Heart left ventricle (tissue), 16 donors: ENCODE measurements at regions of chr9 and their contacts with region 1.

Region 1: DNA sequence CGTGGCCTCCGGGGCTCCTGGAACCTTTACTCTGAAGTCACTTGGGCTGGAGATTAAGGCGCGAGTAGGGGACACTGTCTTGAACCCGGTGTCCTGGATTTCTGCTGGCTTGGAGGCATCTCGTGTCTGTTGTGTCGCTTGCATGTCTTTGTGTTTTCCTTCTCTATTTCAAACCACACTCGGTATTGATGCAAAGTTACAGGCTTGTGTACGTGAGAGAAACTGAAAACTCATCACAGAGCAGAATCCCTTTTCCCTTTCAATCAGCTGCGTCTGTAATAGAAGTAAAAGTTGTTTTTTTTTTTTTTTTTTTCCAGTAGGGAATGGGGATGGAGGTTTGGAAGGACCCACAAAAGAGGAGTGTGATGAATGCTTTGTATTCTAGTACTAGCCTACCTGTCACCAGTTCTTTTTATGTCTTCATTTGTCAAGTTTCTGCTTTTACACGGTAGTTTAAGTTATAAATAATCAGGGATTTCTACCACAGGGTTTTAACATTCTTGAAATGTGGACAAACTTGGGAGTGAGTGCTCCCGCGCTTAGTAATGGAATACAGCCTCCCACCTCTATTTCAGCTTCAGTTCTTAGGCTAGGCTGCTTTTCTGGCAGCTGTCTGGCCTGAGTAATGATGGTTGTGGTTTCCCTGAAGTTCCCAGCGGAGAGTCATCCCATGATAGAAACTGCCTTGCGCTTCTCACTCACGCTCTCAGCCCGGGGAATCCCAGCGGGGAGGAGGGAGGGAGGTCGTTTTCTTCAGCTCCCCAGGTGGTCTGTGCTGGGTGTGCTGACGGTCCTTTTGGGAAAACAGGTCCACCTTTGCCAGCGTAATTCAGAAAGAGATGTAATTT is 763 bp downstream of the TJP2 start:
- DNase-seq: peak in 4 of 5 donors; percentile 41 to 62 (median 54)
- ATAC-seq: peak; percentile 41 to 72 (median 50)
- H3K4me3 ChIP-seq: peak overlapping the region; percentile 65 to 90 (median 76)
- H3K27ac ChIP-seq: peak overlapping the region in 11 of 12 donors; percentile 75 to 96 (median 89)
- H3K4me1 ChIP-seq: peaks cover 7 to 85% (median 47%) of the 10 kb centered on the region in 12 donors
- H3K27me3 ChIP-seq: no peaks in the 10 kb centered on the region
- CTCF ChIP-seq: no peak
- POLR2A ChIP-seq: no peak

Region 2: DNA sequence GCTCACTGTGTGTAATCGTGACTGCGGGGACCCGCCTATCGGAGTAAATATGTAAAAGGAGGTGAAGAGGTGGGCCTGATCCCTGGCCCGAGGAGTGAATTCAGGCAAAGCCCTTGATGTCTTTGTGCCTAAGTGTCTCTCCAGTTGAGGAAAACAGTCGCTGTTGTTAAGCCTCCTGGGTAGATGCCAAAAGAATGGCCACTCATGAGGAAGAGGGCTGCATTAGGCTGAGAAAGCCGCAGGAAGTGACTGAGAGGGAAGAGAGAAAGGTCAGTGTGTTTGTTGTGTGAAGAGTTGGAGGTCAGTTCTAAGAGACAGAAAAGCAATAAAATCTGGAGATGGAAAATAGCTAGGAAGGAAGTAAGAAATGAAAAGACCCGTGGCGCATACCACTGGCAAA is 505.6 kb before region 1 on chr9:
- intact Hi-C with region 1: no loop called
- DNase-seq: no peak
- ATAC-seq: no peak
- H3K4me3 ChIP-seq: no peak overlapping the region
- H3K27ac ChIP-seq: no peak overlapping the region
- H3K4me1 ChIP-seq: peaks cover 0 to 8% (median 0%) of the 10 kb centered on the region in 12 donors
- H3K27me3 ChIP-seq: no peaks in the 10 kb centered on the region
- CTCF ChIP-seq: no peak
- POLR2A ChIP-seq: no peak

Region 3: GRCh38 chr9:69121828-69122548 is 52.9 kb before region 1 on chr9:
- intact Hi-C with region 1: loop called in 1 of 10 experiments (anchors 5 kb)
- DNase-seq: peak; percentile 70 to 84 (median 78)
- ATAC-seq: peak; percentile 82 to 89 (median 84)
- H3K4me3 ChIP-seq: peak overlapping the region; percentile 63 to 87 (median 81)
- H3K27ac ChIP-seq: peak overlapping the region; percentile 70 to 96 (median 90)
- H3K4me1 ChIP-seq: peaks cover 0 to 17% (median 9%) of the 10 kb centered on the region in 12 donors
- H3K27me3 ChIP-seq: no peaks in the 10 kb centered on the region
- CTCF ChIP-seq: peak in 3 of 12 donors; percentile 1 to 32 (median 21)
- POLR2A ChIP-seq: no peak

Region 4: DNA sequence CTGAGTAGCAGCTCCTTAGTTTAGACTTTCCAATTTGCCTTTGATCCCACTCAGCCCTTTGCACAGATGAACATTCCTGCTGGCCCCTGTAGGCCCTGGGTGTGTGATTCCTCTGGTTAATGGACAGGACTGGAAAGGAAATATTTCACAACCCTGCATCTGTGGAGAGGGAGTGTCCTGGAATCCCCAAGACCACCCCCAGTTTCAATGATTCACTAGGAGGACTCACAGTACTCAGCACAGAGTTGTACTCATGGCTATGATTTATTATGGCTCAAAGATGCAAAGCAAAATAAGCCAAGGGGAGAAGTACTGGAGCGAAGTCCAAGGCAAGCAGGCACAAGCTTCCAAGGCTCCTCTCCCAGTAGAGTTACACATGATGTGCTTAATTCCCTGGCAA is 43.2 kb before region 1 on chr9:
- intact Hi-C with region 1: loop called in 1 of 10 experiments (anchors 5 kb)
- DNase-seq: no peak
- ATAC-seq: peak; percentile 31 to 72 (median 48)
- H3K4me3 ChIP-seq: no peak overlapping the region
- H3K27ac ChIP-seq: peak overlapping the region in 10 of 12 donors; percentile 55 to 85 (median 72)
- H3K4me1 ChIP-seq: peaks cover 3 to 71% (median 29%) of the 10 kb centered on the region in 12 donors
- H3K27me3 ChIP-seq: no peaks in the 10 kb centered on the region
- CTCF ChIP-seq: no peak
- POLR2A ChIP-seq: no peak

Region 5: GRCh38 chr9:69143291-69143690 is 31.5 kb before region 1 on chr9:
- intact Hi-C with region 1: loop called in 2 of 10 experiments (anchors 5 kb)
- DNase-seq: peak in 2 of 5 donors; percentile 4 to 17
- ATAC-seq: peak in 1 of 4 donors; percentile 31
- H3K4me3 ChIP-seq: no peak overlapping the region
- H3K27ac ChIP-seq: peak overlapping the region in 4 of 12 donors; percentile 43 to 71 (median 56)
- H3K4me1 ChIP-seq: peaks cover 0 to 44% (median 19%) of the 10 kb centered on the region in 12 donors
- H3K27me3 ChIP-seq: no peaks in the 10 kb centered on the region
- CTCF ChIP-seq: no peak
- POLR2A ChIP-seq: no peak

Region 6: DNA sequence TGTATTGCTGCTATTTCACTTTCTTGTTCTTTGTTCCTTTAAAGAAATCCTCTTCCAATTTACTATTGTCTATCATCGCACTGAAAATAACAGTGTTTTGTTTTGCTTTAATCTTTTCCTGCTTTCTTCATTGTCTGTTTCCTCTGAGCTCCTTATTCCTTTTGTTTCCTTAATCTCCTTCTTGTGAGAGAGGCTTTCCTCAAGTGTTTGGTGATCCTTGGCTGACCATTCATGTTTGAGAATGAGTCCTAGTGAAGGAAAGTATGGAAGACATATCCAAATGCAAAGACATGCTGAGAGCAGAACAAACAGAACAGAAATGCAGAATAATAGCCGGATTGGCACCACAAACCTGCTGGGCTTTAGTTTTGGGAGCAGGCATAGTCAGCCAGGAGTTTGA is 108.2 kb after region 1 on chr9:
- intact Hi-C with region 1: no loop called
- DNase-seq: no peak
- ATAC-seq: no peak
- H3K4me3 ChIP-seq: no peak overlapping the region
- H3K27ac ChIP-seq: no peak overlapping the region
- H3K4me1 ChIP-seq: peaks cover 0 to 4% (median 0%) of the 10 kb centered on the region in 12 donors
- H3K27me3 ChIP-seq: no peaks in the 10 kb centered on the region
- CTCF ChIP-seq: no peak
- POLR2A ChIP-seq: no peak

Region 7: GRCh38 chr9:69678882-69679538 is 504.2 kb after region 1 on chr9:
- intact Hi-C with region 1: no loop called
- DNase-seq: no peak
- ATAC-seq: no peak
- H3K4me3 ChIP-seq: no peak overlapping the region
- H3K27ac ChIP-seq: no peak overlapping the region
- H3K4me1 ChIP-seq: peaks cover 0 to 1% (median 0%) of the 10 kb centered on the region in 12 donors
- H3K27me3 ChIP-seq: no peaks in the 10 kb centered on the region
- CTCF ChIP-seq: no peak
- POLR2A ChIP-seq: no peak